ENCODE measurements at regions of chr4 and their contacts with region 1.

Region 1: GRCh38 chr4:83639849-83640493 is 104.1 kb downstream of the GPAT3 start:
- DNase-seq: peak; percentile 36 to 56
- H3K4me3 ChIP-seq: no peak overlapping the region
- H3K27ac ChIP-seq: no peak overlapping the region
- H3K4me1 ChIP-seq: no peaks in the 10 kb centered on the region
- H3K27me3 ChIP-seq: no peaks in the 10 kb centered on the region
- CTCF ChIP-seq: peak; percentile 83

Region 2: GRCh38 chr4:82957045-82957444 is 682.9 kb before region 1 on chr4:
- CTCF ChIA-PET with region 1: no interaction called
- POLR2A ChIA-PET with region 1: no interaction called
- intact Hi-C with region 1: no loop called
- DNase-seq: no peak
- H3K4me3 ChIP-seq: no peak overlapping the region
- H3K27ac ChIP-seq: no peak overlapping the region
- H3K4me1 ChIP-seq: no peaks in the 10 kb centered on the region
- H3K27me3 ChIP-seq: no peaks in the 10 kb centered on the region
- CTCF ChIP-seq: no peak

Region 3: DNA sequence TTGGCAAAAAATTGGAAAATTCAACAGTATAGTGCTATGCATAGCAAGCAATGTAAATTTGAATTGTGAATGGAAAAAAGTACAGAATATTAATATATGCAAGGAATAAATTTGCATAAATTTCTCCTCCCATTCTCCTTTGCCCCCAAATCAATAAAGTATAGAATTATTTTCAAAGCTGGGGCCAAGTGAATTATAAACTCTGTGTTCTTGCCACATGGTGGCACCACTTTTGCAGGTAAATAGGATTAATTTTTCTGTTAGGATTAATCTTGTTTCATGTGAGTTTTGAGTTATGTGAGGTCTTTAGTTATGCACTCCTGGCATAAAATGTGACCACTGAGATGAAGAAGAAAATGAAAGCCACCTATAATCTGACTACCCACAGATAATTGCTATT is 585.0 kb before region 1 on chr4:
- CTCF ChIA-PET with region 1: no interaction called
- POLR2A ChIA-PET with region 1: no interaction called
- intact Hi-C with region 1: loop called (anchors 10 kb)
- DNase-seq: peak in 1 of 2 experiments; percentile 37
- H3K4me3 ChIP-seq: no peak overlapping the region
- H3K27ac ChIP-seq: no peak overlapping the region
- H3K4me1 ChIP-seq: no peaks in the 10 kb centered on the region
- H3K27me3 ChIP-seq: no peaks in the 10 kb centered on the region
- CTCF ChIP-seq: peak; percentile 63

Region 4: GRCh38 chr4:83490876-83491450 is 149.0 kb before region 1 on chr4:
- CTCF ChIA-PET with region 1: interaction called, 5 read pairs
- POLR2A ChIA-PET with region 1: no interaction called
- intact Hi-C with region 1: loop called (anchors 1 kb)
- DNase-seq: no peak
- H3K4me3 ChIP-seq: no peak overlapping the region
- H3K27ac ChIP-seq: no peak overlapping the region
- H3K4me1 ChIP-seq: no peaks in the 10 kb centered on the region
- H3K27me3 ChIP-seq: no peaks in the 10 kb centered on the region
- CTCF ChIP-seq: peak; percentile 82

Region 5: DNA sequence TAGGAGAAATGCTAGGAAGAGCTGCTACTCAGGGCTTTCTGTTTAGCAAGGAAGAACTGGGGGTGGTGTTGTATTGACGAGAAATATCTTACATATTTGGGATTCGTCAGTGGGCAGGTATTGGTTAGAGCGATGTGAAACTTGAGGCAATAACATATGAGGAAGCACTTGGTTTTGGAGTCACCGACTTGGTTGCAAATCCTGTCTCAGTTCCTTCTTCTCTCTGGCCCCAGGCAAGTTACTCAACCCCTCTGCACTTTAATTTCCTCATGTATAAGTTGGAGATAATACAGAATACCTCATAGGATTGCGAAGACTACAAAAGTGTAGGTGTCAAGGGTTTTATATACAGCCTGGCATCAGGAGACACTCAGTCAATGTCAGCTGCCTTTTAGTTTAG is 70.0 kb before region 1 on chr4:
- CTCF ChIA-PET with region 1: no interaction called
- POLR2A ChIA-PET with region 1: no interaction called
- intact Hi-C with region 1: no loop called
- DNase-seq: peak; percentile 65 to 97
- H3K4me3 ChIP-seq: peak overlapping the region; percentile 44; the same call in 1 of the 2 replicates
- H3K27ac ChIP-seq: peak overlapping the region; percentile 97
- H3K4me1 ChIP-seq: peaks cover 40% of the 10 kb centered on the region
- H3K27me3 ChIP-seq: no peaks in the 10 kb centered on the region
- CTCF ChIP-seq: no peak

Region 6: GRCh38 chr4:83589279-83589678 is 50.7 kb before region 1 on chr4:
- CTCF ChIA-PET with region 1: no interaction called
- POLR2A ChIA-PET with region 1: no interaction called
- intact Hi-C with region 1: no loop called
- DNase-seq: no peak
- H3K4me3 ChIP-seq: no peak overlapping the region
- H3K27ac ChIP-seq: no peak overlapping the region
- H3K4me1 ChIP-seq: no peaks in the 10 kb centered on the region
- H3K27me3 ChIP-seq: no peaks in the 10 kb centered on the region
- CTCF ChIP-seq: no peak

Region 7: GRCh38 chr4:83771113-83771705 is 131.2 kb after region 1 on chr4:
- CTCF ChIA-PET with region 1: no interaction called
- POLR2A ChIA-PET with region 1: no interaction called
- intact Hi-C with region 1: loop called (anchors 10 kb)
- DNase-seq: peak in 1 of 2 experiments; percentile 51
- H3K4me3 ChIP-seq: no peak overlapping the region
- H3K27ac ChIP-seq: no peak overlapping the region
- H3K4me1 ChIP-seq: no peaks in the 10 kb centered on the region
- H3K27me3 ChIP-seq: no peaks in the 10 kb centered on the region
- CTCF ChIP-seq: peak; percentile 73

Region 8: GRCh38 chr4:83785891-83786290 is 145.9 kb after region 1 on chr4:
- CTCF ChIA-PET with region 1: no interaction called
- POLR2A ChIA-PET with region 1: no interaction called
- intact Hi-C with region 1: no loop called
- DNase-seq: no peak
- H3K4me3 ChIP-seq: no peak overlapping the region
- H3K27ac ChIP-seq: no peak overlapping the region
- H3K4me1 ChIP-seq: no peaks in the 10 kb centered on the region
- H3K27me3 ChIP-seq: no peaks in the 10 kb centered on the region
- CTCF ChIP-seq: no peak

Region 9: DNA sequence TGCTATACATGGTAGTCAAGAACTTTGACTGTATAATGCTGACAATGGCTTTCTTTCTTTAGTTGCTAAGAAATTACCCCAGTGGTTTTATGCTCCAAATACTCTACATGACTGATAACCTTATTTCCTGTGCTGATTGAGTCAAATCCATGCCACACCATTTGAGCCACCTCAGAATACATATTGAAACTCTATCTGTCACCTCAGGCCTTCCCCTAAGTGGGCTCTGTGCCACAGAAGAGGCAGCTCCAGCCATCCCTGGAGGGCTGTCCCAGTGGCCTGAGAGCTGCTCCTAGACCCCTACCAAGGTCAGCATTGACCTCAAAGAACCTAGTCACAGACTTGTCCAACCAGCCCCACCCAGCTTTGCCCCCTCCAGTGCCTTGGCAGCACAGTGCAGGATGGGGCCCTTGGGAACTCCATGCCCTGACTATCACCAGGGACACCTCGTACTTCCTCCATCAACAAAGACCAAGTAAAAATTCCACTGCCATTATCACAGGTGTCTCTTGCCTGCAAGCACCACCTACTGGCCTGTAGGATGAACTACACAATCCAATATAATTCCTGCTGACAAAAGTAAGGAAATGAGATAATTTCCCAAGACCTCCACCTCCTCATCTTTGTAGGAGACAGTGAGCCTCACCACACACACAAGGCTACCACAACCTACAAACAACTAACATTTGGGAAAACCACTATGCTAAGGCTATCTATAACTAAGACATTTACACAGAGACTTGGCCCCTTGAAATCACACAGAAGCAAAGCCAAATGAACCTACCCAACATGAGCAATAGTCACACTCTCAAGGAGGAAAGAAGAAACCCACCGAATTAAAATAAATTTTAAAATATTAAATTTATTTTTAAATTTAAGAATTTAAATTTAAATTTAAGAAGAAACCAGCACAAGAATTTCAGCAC is 619.2 kb after region 1 on chr4:
- CTCF ChIA-PET with region 1: no interaction called
- POLR2A ChIA-PET with region 1: no interaction called
- intact Hi-C with region 1: loop called (anchors 2 kb)
- DNase-seq: no peak
- H3K4me3 ChIP-seq: no peak overlapping the region
- H3K27ac ChIP-seq: no peak overlapping the region
- H3K4me1 ChIP-seq: no peaks in the 10 kb centered on the region
- H3K27me3 ChIP-seq: no peaks in the 10 kb centered on the region
- CTCF ChIP-seq: peak; percentile 72